Activated T-helper 2 cell treated with anti-CD3 and anti-CD28 coated beads, Interferon-gamma antibody, Interleukin-2, Interleukin-4, amounts not matched to agents 10 μg/mL and 5 μg/mL and 100 μg/mL, durations not matched to agents 14 hours and 24 hours and 36 hours (primary cell): ENCODE measurements at regions of chr2 and their contacts with region 1.

Region 1: GRCh38 chr2:110677530-110678456 is at the start of gene BUB1:
- DNase-seq: peak; percentile 96
- H3K4me3 Mint-ChIP-seq: peak within 1 kb of the TSS; percentile 86
- H3K27ac Mint-ChIP-seq: peak within 1 kb of the TSS; percentile 90
- H3K4me1 Mint-ChIP-seq: peaks cover 31% of the 10 kb centered on the region
- H3K27me3 Mint-ChIP-seq: peaks cover 2% of the 10 kb centered on the region
- total RNA-seq, gene BUB1: 68.4 and 74.4 TPM in 2 replicates

Region 2: DNA sequence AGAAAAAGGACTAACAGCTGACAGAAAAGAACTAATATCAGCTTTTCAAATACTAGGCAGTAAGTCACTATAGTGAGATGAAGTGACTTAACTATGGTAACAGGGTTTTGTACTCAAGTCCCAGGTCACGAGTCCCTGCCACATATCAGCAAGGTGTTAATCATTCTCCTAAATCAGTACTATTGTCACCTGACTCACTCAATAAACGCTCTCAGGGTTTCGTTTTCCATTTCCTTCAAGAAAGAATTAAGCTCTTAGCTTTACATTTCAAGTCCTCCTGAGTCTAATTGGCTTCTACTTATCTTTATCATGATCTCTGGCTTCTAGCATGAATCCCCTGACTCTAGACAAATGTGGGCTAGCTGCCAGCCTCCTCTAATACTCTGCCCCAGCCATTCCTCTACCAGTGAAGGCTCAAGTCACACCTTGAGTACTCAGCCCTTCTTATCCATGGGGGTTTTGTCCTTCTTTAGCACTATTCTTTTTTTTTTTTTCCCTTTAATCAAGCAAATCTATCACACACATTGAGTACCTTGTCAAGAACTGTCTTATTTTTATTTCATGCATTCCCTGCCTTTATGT is 20.0 kb before region 1 on chr2:
- intact Hi-C with region 1: loop called (anchors 2 kb)
- DNase-seq: no peak
- H3K4me3 Mint-ChIP-seq: no peak overlapping the region
- H3K27ac Mint-ChIP-seq: peak overlapping the region; percentile 65
- H3K4me1 Mint-ChIP-seq: peaks cover 23% of the 10 kb centered on the region
- H3K27me3 Mint-ChIP-seq: no peaks in the 10 kb centered on the region

Region 3: GRCh38 chr2:110713513-110714362 is 35.9 kb after region 1 on chr2:
- intact Hi-C with region 1: loop called (anchors 2 kb)
- DNase-seq: no peak
- H3K4me3 Mint-ChIP-seq: no peak overlapping the region
- H3K27ac Mint-ChIP-seq: no peak overlapping the region
- H3K4me1 Mint-ChIP-seq: peaks cover 3% of the 10 kb centered on the region
- H3K27me3 Mint-ChIP-seq: peaks cover 47% of the 10 kb centered on the region

Region 4: GRCh38 chr2:110748489-110748867 is 70.7 kb after region 1 on chr2:
- intact Hi-C with region 1: loop called (anchors 1 kb)
- DNase-seq: peak; percentile 81
- H3K4me3 Mint-ChIP-seq: peak overlapping the region; percentile 67
- H3K27ac Mint-ChIP-seq: peak overlapping the region; percentile 52
- H3K4me1 Mint-ChIP-seq: peaks cover 55% of the 10 kb centered on the region
- H3K27me3 Mint-ChIP-seq: peaks cover 15% of the 10 kb centered on the region

Region 5: GRCh38 chr2:111030260-111030891 is 352.6 kb after region 1 on chr2:
- intact Hi-C with region 1: no loop called
- DNase-seq: no peak
- H3K4me3 Mint-ChIP-seq: no peak overlapping the region
- H3K27ac Mint-ChIP-seq: no peak overlapping the region
- H3K4me1 Mint-ChIP-seq: peaks cover 31% of the 10 kb centered on the region
- H3K27me3 Mint-ChIP-seq: peaks cover 40% of the 10 kb centered on the region